ENCODE measurements at regions of chr12 and their contacts with region 1.

Region 1: GRCh38 chr12:113048716-113049127 is 7.8 kb upstream of the DTX1 start:
- DNase-seq: no peak
- ATAC-seq: peak; percentile 91 to 97 (median 95)
- H3K4me3 ChIP-seq: no peak overlapping the region
- H3K27ac ChIP-seq: no peak overlapping the region
- H3K4me1 ChIP-seq: no peaks in the 10 kb centered on the region
- H3K27me3 ChIP-seq: no peaks in the 10 kb centered on the region
- CTCF ChIP-seq: peak; percentile 77 to 91 (median 83)
- POLR2A ChIP-seq: no peak

Region 2: GRCh38 chr12:112759789-112760188 is 288.9 kb before region 1 on chr12:
- intact Hi-C with region 1: no loop called
- DNase-seq: no peak
- ATAC-seq: no peak
- H3K4me3 ChIP-seq: no peak overlapping the region
- H3K27ac ChIP-seq: no peak overlapping the region
- H3K4me1 ChIP-seq: no peaks in the 10 kb centered on the region
- H3K27me3 ChIP-seq: no peaks in the 10 kb centered on the region
- CTCF ChIP-seq: no peak
- POLR2A ChIP-seq: no peak

Region 3: DNA sequence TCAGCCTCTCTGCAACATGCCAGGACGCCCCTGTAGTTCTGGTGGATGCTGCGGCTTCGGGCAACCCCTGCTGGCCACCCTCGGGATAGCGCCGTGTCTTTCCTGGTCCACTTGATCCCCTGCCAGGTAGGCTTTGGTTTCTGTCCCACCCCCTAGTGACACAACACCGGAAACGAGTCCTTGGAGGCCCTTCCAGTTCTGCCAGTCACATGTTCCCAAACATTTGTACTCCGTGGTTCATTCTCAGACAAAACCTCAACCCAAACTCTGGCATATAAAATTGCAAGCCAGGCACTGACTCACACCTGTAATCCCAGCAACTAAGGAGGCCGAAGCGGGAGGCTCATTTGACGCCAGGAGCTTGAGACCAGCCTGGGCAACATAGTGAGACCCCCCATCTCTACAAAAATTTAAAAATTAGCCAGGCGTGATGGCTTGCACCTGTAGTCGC is 49.7 kb after region 1 on chr12:
- intact Hi-C with region 1: loop called (anchors 5 kb)
- DNase-seq: peak; percentile 85 to 94 (median 86)
- ATAC-seq: peak; percentile 94 to 98 (median 96)
- H3K4me3 ChIP-seq: no peak overlapping the region
- H3K27ac ChIP-seq: peak overlapping the region in 1 of 3 donors; percentile 40
- H3K4me1 ChIP-seq: peaks cover 0 to 12% (median under 1%) of the 10 kb centered on the region in 4 donors
- H3K27me3 ChIP-seq: no peaks in the 10 kb centered on the region
- CTCF ChIP-seq: peak; percentile 91 to 98 (median 94)
- POLR2A ChIP-seq: no peak

Region 4: GRCh38 chr12:113165521-113166450 is 117.1 kb after region 1 on chr12:
- intact Hi-C with region 1: loop called (anchors 5 to 10 kb)
- DNase-seq: no peak
- ATAC-seq: no peak
- H3K4me3 ChIP-seq: no peak overlapping the region
- H3K27ac ChIP-seq: no peak overlapping the region
- H3K4me1 ChIP-seq: peaks cover 0 to 7% (median 0%) of the 10 kb centered on the region in 4 donors
- H3K27me3 ChIP-seq: no peaks in the 10 kb centered on the region
- CTCF ChIP-seq: no peak
- POLR2A ChIP-seq: no peak

Region 5: DNA sequence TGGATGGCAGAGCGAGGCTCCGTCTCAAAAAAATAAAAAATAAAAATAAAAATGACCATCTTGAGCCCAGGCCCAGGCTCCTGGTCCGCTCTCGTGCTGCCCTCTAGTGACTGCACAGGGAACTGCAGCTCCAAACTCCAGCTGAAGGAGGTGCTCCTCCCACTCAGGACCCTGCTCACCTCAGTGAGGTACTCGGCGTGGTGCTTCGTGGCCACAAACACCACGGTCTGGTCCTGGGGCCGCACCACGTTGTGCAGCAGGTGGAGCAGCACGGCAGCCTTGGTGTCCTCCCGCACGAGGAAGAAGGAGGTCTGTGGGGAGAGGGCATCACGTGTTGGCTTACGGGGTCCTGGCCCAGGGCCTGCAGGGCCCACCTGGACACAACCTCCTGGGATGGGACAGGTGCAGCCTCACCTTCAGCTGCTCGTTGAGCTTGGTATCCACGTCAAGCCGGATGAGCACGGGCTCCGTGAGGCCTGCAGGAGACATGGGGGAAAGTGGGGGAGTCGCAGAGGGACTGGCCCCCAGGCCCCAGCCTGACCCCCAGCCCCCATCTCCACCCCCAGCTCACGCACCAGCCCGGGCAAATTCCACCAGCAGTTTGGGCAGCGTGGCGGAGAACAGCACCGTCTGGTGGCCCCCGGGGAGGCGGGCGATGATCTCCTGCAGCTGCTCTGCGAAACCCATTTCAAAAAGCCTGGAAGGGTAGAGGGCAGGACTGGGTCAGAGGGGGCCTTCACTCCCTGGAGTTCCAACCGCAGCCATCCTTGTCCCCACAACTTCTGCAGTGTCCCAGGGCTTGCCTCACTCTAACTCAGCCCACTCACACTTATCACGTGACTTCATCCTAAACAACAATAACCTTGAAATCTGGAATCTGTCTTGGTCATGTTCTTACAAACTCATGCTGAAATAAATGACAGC is 126.0 kb after region 1 on chr12:
- intact Hi-C with region 1: loop called (anchors 5 to 10 kb)
- DNase-seq: peak; percentile 67 to 76 (median 71)
- ATAC-seq: peak; percentile 87 to 95 (median 90)
- H3K4me3 ChIP-seq: no peak overlapping the region
- H3K27ac ChIP-seq: no peak overlapping the region
- H3K4me1 ChIP-seq: no peaks in the 10 kb centered on the region
- H3K27me3 ChIP-seq: no peaks in the 10 kb centered on the region
- CTCF ChIP-seq: peak; percentile 85 to 100 (median 98)
- POLR2A ChIP-seq: no peak

Region 6: GRCh38 chr12:113261847-113262470 is 213.2 kb after region 1 on chr12:
- intact Hi-C with region 1: no loop called
- DNase-seq: no peak
- ATAC-seq: no peak
- H3K4me3 ChIP-seq: no peak overlapping the region
- H3K27ac ChIP-seq: peak overlapping the region in 2 of 3 donors; percentile 34 to 74
- H3K4me1 ChIP-seq: peaks cover 0 to 57% (median 10%) of the 10 kb centered on the region in 4 donors
- H3K27me3 ChIP-seq: no peaks in the 10 kb centered on the region
- CTCF ChIP-seq: no peak
- POLR2A ChIP-seq: no peak